ENCODE measurements at regions of chr2 and their contacts with region 1.

Region 1: GRCh38 chr2:221502270-221503010 is 69.7 kb downstream of the EPHA4 start:
- DNase-seq: no peak
- ATAC-seq: no peak
- H3K4me3 ChIP-seq: no peak overlapping the region
- H3K4me3 Mint-ChIP-seq: no peak overlapping the region
- H3K27ac ChIP-seq: no peak overlapping the region
- H3K27ac Mint-ChIP-seq: no peak overlapping the region
- H3K4me1 ChIP-seq: no peaks in the 10 kb centered on the region
- H3K4me1 Mint-ChIP-seq: peaks cover 13% of the 10 kb centered on the region
- H3K27me3 ChIP-seq: no peaks in the 10 kb centered on the region
- H3K27me3 Mint-ChIP-seq: no peaks in the 10 kb centered on the region
- CTCF ChIP-seq: no peak

Region 2: DNA sequence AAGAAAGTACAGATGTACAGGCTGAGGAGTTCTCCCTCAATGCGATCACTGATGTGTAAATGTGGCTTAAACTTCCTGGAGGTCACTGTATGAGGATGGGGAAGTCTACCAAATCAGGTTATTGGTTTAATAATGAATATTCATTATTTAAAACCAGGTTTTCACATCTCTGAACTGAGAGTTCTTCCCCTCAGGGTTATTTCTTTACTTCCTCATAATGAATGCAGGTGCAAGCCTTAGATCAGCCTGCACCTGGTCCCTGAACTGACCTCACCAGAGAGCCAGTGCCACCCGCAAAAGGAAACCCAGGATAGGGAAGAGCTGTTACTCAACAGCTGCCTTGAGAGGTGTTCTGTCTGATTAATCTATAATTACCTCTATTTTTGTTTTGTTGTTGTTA is 299.3 kb before region 1 on chr2:
- CTCF ChIA-PET with region 1: no interaction called
- POLR2A ChIA-PET with region 1: no interaction called
- intact Hi-C with region 1: no loop called
- DNase-seq: peak in 1 of 9 experiments; percentile 6
- ATAC-seq: no peak
- H3K4me3 ChIP-seq: no peak overlapping the region
- H3K4me3 Mint-ChIP-seq: no peak overlapping the region
- H3K27ac ChIP-seq: no peak overlapping the region
- H3K27ac Mint-ChIP-seq: no peak overlapping the region
- H3K4me1 ChIP-seq: no peaks in the 10 kb centered on the region
- H3K4me1 Mint-ChIP-seq: no peaks in the 10 kb centered on the region
- H3K27me3 ChIP-seq: no peaks in the 10 kb centered on the region
- H3K27me3 Mint-ChIP-seq: no peaks in the 10 kb centered on the region
- CTCF ChIP-seq: no peak

Region 3: GRCh38 chr2:221461901-221462300 is 40.5 kb before region 1 on chr2:
- CTCF ChIA-PET with region 1: no interaction called
- POLR2A ChIA-PET with region 1: interaction called, 3 read pairs
- intact Hi-C with region 1: loop called in 1 of 2 experiments (anchors 5 kb)
- DNase-seq: no peak
- ATAC-seq: no peak
- H3K4me3 ChIP-seq: no peak overlapping the region
- H3K4me3 Mint-ChIP-seq: no peak overlapping the region
- H3K27ac ChIP-seq: no peak overlapping the region
- H3K27ac Mint-ChIP-seq: no peak overlapping the region
- H3K4me1 ChIP-seq: peaks cover 7% of the 10 kb centered on the region
- H3K4me1 Mint-ChIP-seq: peaks cover 36% of the 10 kb centered on the region
- H3K27me3 ChIP-seq: peaks cover 0 to 2% of the 10 kb centered on the region in 2 experiments
- H3K27me3 Mint-ChIP-seq: peaks cover 6% of the 10 kb centered on the region
- CTCF ChIP-seq: no peak

Region 4: DNA sequence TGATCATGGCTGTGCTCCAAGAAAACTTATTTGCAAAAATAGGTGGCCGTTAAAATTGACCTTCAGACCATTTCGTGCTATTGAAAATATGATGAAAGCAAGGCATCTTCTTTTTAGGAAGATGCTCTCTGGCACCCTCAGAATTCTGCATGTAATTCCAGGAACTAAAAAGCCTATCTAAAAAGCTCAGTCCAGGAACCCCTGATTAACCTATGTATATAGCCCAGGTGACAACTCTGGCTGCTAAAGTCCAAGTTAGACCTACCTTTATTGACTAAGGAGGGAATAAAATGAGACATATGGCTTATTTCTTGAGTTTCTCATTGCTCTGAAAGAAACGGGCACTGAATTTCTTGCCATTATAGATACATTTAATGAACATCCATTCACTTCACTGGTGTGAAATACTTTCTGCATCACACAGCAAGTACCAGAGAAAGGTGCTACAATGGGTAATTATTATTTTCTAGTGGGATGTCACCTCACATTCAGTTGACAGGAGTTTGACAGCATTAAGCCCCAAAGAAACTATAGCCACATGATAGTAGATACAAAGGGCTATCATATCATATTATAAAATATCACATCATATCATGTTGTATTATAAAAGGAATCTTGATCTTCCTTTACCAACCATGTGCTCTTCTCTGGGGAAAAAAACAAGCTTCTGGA is 14.2 kb before region 1 on chr2:
- CTCF ChIA-PET with region 1: interaction called, 3 read pairs
- POLR2A ChIA-PET with region 1: no interaction called
- intact Hi-C with region 1: loop called in 1 of 2 experiments (anchors 2 kb)
- DNase-seq: no peak
- ATAC-seq: no peak
- H3K4me3 ChIP-seq: no peak overlapping the region
- H3K4me3 Mint-ChIP-seq: no peak overlapping the region
- H3K27ac ChIP-seq: no peak overlapping the region
- H3K27ac Mint-ChIP-seq: no peak overlapping the region
- H3K4me1 ChIP-seq: no peaks in the 10 kb centered on the region
- H3K4me1 Mint-ChIP-seq: no peaks in the 10 kb centered on the region
- H3K27me3 ChIP-seq: no peaks in the 10 kb centered on the region
- H3K27me3 Mint-ChIP-seq: peaks cover 2% of the 10 kb centered on the region
- CTCF ChIP-seq: no peak

Measured in CD8-positive, alpha-beta T cell (primary cell).